ENCODE measurements at regions of chr6 and their contacts with region 1.

Region 1: GRCh38 chr6:159789377-159790148 is at the start of gene TCP1:
- DNase-seq: peak; percentile 99
- ATAC-seq: peak; percentile 93
- total RNA-seq, gene TCP1: 164 TPM

Region 2: GRCh38 chr6:159693128-159693893 is 96.3 kb before region 1 on chr6 and contains the start of gene SOD2:
- intact Hi-C with region 1: loop called (anchors 10 kb)
- DNase-seq: peak; percentile 93
- ATAC-seq: peak; percentile 89
- total RNA-seq, gene SOD2: 1,053 TPM

Region 3: DNA sequence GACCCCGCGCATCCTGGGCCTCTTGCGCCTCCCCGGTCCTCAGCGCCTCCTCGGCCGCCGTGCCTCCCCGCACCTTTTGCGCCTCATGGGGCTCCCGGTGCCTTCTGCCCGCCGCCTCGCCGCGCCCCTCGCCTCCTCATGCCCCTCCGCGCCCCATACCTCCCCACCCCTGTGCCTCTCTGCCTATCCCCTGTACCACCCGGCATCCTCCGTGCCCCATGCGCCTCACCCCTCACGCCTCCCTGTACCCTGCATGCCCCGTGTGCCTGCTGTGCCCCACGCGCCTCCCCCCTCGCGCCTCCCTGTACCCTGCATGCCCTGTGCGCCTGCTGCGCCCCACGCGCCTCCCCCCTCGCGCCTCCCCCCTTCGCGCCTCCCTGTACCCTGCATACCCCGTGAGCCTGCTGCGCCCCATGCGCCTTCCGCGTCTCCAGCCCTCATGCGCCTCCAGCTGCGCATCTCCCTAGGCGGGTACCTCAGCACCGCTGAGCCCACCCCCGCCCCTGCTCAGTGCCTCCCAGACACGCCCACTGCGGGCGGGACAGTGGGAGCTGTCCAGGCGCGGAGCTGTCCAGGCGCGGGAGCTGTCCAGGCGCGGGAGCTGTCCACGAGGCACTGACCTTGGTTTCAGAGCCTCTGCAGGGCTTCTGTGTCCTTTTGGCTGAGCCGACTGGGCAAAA is 216.4 kb after region 1 on chr6:
- intact Hi-C with region 1: no loop called
- DNase-seq: peak; percentile 74
- ATAC-seq: peak; percentile 87

Region 4: GRCh38 chr6:160041608-160042007 is 252.0 kb after region 1 on chr6:
- intact Hi-C with region 1: loop called (anchors 10 kb)
- DNase-seq: peak; percentile 80
- ATAC-seq: peak; percentile 92

Measured in left ventricle myocardium superior (tissue), 1 donor.